Ascending aorta (tissue), 2 donors: ENCODE measurements at regions of chr1 and their contacts with region 1.

Region 1: DNA sequence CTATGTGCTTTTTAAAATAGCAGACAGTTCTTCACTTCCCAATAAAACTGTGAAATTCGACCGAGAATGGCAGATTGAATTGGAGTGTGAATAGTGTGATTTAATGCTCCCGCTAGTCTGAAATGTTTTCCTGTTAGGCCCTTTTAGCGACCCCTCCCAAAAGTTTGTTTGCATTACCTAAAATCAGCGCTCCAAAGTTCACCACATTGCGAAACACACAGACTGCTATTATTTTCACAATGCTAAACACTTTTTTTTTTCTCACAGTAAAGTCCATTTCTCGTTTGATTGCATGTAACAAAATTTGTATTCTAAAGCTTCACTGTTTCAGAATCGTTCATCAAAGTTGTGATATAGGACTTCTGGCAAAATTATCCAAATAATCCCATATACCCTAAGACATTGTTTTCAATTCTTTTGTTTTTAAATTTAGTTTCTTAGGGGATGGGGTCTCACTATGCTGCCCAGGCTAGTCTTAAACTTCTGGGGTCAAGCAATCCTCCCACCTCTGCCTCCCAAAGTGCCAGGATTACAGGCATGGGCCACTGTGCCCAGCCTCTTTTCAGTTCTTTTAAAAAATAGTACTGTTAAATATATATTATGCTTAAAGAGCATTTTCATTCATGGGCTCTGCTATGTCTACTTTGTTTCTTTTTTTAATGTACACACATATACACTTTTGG is 76.5 kb upstream of the USH2A start:
- DNase-seq: no peak
- H3K4me3 ChIP-seq: no peak overlapping the region
- H3K27ac ChIP-seq: no peak overlapping the region
- H3K4me1 ChIP-seq: no peaks in the 10 kb centered on the region
- H3K27me3 ChIP-seq: no peaks in the 10 kb centered on the region
- CTCF ChIP-seq: no peak

Region 2: DNA sequence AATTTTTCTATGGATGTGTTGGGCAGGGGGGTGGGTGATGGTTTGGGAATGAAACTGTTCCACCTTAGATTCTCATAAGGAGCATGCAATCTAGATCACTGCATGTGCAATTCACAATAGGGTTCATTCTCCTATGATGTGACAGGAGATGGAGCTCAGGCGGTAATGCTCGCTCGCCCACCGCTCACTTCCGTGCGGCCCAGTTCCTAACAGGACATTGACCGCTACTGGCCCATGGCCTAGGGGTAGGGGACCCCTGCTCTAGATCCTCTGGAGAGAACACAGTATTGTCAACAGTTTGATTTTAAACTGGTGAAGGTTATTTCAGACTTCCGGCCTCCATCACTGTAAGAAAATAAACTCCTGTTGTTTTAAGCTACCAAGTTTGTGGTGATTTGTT is 21.5 kb before region 1 on chr1:
- intact Hi-C with region 1: loop called (anchors 1 kb)
- DNase-seq: no peak
- H3K4me3 ChIP-seq: no peak overlapping the region
- H3K27ac ChIP-seq: no peak overlapping the region
- H3K4me1 ChIP-seq: no peaks in the 10 kb centered on the region
- H3K27me3 ChIP-seq: no peaks in the 10 kb centered on the region
- CTCF ChIP-seq: no peak

Region 3: GRCh38 chr1:216632980-216633379 is 133.2 kb after region 1 on chr1:
- intact Hi-C with region 1: no loop called
- DNase-seq: no peak
- H3K4me3 ChIP-seq: no peak overlapping the region
- H3K27ac ChIP-seq: no peak overlapping the region
- H3K4me1 ChIP-seq: no peaks in the 10 kb centered on the region
- H3K27me3 ChIP-seq: no peaks in the 10 kb centered on the region
- CTCF ChIP-seq: no peak